CD8-positive, alpha-beta T cell (primary cell): ENCODE measurements at regions of chr6 and their contacts with region 1.

Region 1: GRCh38 chr6:53492860-53493634 is 51.9 kb downstream of the GCLC start:
- DNase-seq: peak in 2 of 9 experiments; percentile 59 to 67
- ATAC-seq: peak; percentile 40
- H3K4me3 ChIP-seq: no peak overlapping the region
- H3K4me3 Mint-ChIP-seq: no peak overlapping the region
- H3K27ac ChIP-seq: no peak overlapping the region
- H3K27ac Mint-ChIP-seq: no peak overlapping the region
- H3K4me1 ChIP-seq: no peaks in the 10 kb centered on the region
- H3K4me1 Mint-ChIP-seq: no peaks in the 10 kb centered on the region
- H3K27me3 ChIP-seq: no peaks in the 10 kb centered on the region
- H3K27me3 Mint-ChIP-seq: peaks cover 8% of the 10 kb centered on the region
- CTCF ChIP-seq: peak; percentile 93

Region 2: GRCh38 chr6:53504512-53504911 is 11.5 kb after region 1 on chr6:
- CTCF ChIA-PET with region 1: interaction called, 34 read pairs
- POLR2A ChIA-PET with region 1: interaction called, 3 read pairs
- intact Hi-C with region 1: no loop called
- DNase-seq: no peak
- ATAC-seq: no peak
- H3K4me3 ChIP-seq: no peak overlapping the region
- H3K4me3 Mint-ChIP-seq: no peak overlapping the region
- H3K27ac ChIP-seq: no peak overlapping the region
- H3K27ac Mint-ChIP-seq: no peak overlapping the region
- H3K4me1 ChIP-seq: no peaks in the 10 kb centered on the region
- H3K4me1 Mint-ChIP-seq: no peaks in the 10 kb centered on the region
- H3K27me3 ChIP-seq: no peaks in the 10 kb centered on the region
- H3K27me3 Mint-ChIP-seq: no peaks in the 10 kb centered on the region
- CTCF ChIP-seq: no peak

Region 3: GRCh38 chr6:53651764-53652401 is 158.8 kb after region 1 on chr6:
- CTCF ChIA-PET with region 1: interaction called, 98 read pairs
- POLR2A ChIA-PET with region 1: interaction called, 9 read pairs
- intact Hi-C with region 1: loop called (anchors 1 kb)
- DNase-seq: peak; percentile 57 to 91 (median 79)
- ATAC-seq: peak; percentile 86
- H3K4me3 ChIP-seq: peak overlapping the region; percentile 67 to 81
- H3K4me3 Mint-ChIP-seq: peak overlapping the region; percentile 91
- H3K27ac ChIP-seq: peak overlapping the region; percentile 54 to 65
- H3K27ac Mint-ChIP-seq: peak overlapping the region; percentile 89
- H3K4me1 ChIP-seq: peaks cover 32% of the 10 kb centered on the region
- H3K4me1 Mint-ChIP-seq: peaks cover 32% of the 10 kb centered on the region
- H3K27me3 ChIP-seq: no peaks in the 10 kb centered on the region
- H3K27me3 Mint-ChIP-seq: no peaks in the 10 kb centered on the region
- CTCF ChIP-seq: no peak

Region 4: GRCh38 chr6:53679446-53679933 is 186.4 kb after region 1 on chr6:
- CTCF ChIA-PET with region 1: interaction called, 12 read pairs
- POLR2A ChIA-PET with region 1: no interaction called
- intact Hi-C with region 1: loop called (anchors 1 kb)
- DNase-seq: peak in 2 of 9 experiments; percentile 50 to 64
- ATAC-seq: peak; percentile 61
- H3K4me3 ChIP-seq: no peak overlapping the region
- H3K4me3 Mint-ChIP-seq: no peak overlapping the region
- H3K27ac ChIP-seq: no peak overlapping the region
- H3K27ac Mint-ChIP-seq: no peak overlapping the region
- H3K4me1 ChIP-seq: no peaks in the 10 kb centered on the region
- H3K4me1 Mint-ChIP-seq: no peaks in the 10 kb centered on the region
- H3K27me3 ChIP-seq: no peaks in the 10 kb centered on the region
- H3K27me3 Mint-ChIP-seq: peaks cover 2% of the 10 kb centered on the region
- CTCF ChIP-seq: peak; percentile 42

Region 5: GRCh38 chr6:53734473-53735299 is 241.6 kb after region 1 on chr6:
- CTCF ChIA-PET with region 1: interaction called, 253 read pairs
- POLR2A ChIA-PET with region 1: no interaction called
- intact Hi-C with region 1: no loop called
- DNase-seq: peak in 5 of 9 experiments; percentile 9 to 54 (median 24)
- ATAC-seq: peak; percentile 38
- H3K4me3 ChIP-seq: no peak overlapping the region
- H3K4me3 Mint-ChIP-seq: no peak overlapping the region
- H3K27ac ChIP-seq: no peak overlapping the region
- H3K27ac Mint-ChIP-seq: no peak overlapping the region
- H3K4me1 ChIP-seq: peaks cover 15% of the 10 kb centered on the region
- H3K4me1 Mint-ChIP-seq: peaks cover 17% of the 10 kb centered on the region
- H3K27me3 ChIP-seq: no peaks in the 10 kb centered on the region
- H3K27me3 Mint-ChIP-seq: peaks cover 10% of the 10 kb centered on the region
- CTCF ChIP-seq: no peak